Endothelial cell of umbilical vein (primary cell): ENCODE measurements at regions of chr1 and their contacts with region 1.

Region 1: DNA sequence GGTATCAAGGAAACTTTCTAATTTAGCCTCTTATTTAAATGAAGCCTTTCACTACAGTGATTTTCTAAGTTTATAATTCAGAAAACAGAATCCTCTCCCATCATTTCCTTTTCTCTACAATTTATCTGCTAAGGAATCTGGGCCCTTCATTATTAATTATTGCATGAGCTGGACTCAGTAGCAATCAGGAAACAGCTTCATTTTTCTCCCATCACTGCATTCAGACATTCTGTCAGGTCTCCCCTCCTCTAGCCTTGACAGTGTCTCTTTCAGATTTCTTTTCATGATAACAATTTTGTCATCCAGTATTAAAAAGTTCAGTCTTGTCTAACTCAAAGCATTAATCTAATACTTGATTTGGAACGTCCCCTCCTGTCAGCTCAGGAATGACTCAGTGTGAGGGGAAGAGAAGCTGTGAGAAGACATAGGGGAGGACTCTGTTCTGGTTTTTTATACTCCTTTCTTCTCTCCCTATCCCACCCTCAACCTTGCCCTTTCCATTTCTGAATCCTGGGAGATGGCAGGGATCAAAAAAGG is 28.1 kb downstream of the SLC44A5 start:
- DNase-seq: peak; percentile 52
- H3K4me3 ChIP-seq: no peak overlapping the region
- H3K27ac ChIP-seq: no peak overlapping the region
- H3K4me1 ChIP-seq: peaks cover 28% of the 10 kb centered on the region
- H3K27me3 ChIP-seq: no peaks in the 10 kb centered on the region
- CTCF ChIP-seq: peak in 1 of 2 donors; percentile 19
- POLR2A ChIP-seq: no peak

Region 2: DNA sequence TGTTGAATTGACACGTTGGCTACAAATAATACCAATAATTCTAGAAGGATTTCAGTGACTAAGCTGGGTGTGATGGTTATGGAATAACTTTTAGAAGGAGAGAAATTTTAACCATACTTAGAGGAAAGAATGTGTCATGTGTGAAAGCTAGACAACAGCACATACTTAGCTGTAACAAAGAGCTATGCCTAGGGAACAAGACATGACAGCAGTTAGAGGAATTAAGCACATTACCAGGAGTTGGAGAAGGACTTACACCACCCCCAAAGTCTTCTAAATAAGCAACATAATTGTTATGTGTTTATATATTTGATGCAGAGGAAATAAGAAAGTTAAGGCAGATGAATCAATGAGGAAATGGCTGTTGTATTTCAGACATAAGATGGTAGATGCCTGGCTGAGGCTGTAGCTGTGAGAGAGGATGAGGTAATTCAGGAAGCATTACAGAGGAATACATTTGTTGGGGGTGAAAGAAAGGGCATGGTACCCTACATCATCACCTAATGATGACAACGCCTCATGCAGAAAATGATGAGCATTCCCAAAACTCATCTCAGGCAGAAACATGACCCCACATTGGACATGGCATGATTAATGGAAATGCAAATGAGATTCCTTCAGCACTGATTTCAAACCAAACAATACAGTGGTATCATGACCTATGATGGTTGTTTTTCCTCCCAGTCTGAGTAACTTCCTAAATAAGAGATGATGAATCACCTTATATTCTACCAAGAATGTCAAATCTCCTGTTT is 237.1 kb before region 1 on chr1:
- CTCF ChIA-PET with region 1: interaction called, 5 read pairs
- POLR2A ChIA-PET with region 1: no interaction called
- dilution Hi-C with region 1: no loop called
- intact Hi-C with region 1: loop called (anchors 1 kb)
- DNase-seq: peak; percentile 95
- H3K4me3 ChIP-seq: no peak overlapping the region
- H3K27ac ChIP-seq: peak overlapping the region; percentile 94
- H3K4me1 ChIP-seq: peaks cover 27% of the 10 kb centered on the region
- H3K27me3 ChIP-seq: no peaks in the 10 kb centered on the region
- CTCF ChIP-seq: no peak
- POLR2A ChIP-seq: no peak

Region 3: DNA sequence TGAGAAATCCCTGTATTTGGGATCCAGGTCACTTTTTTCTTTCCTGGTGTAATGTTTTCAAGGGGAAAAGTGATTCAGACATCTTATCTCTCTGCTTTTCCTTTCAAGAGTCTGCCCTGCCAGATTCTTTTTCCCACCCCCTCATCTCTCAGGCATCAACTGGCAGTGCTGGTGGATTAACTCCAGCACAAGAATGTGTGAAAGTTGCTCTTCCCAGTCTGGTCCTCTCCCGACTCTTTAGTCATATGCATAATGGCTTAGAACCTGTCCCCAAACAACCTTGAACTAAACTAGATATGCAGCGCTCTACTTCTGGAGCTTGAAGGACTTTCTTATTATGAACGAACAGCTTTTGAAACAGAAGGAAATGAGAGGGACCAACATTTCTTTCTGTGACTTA is 60.4 kb before region 1 on chr1:
- CTCF ChIA-PET with region 1: interaction called, 10 read pairs
- POLR2A ChIA-PET with region 1: no interaction called
- dilution Hi-C with region 1: no loop called
- intact Hi-C with region 1: loop called (anchors 5 kb)
- DNase-seq: peak; percentile 93
- H3K4me3 ChIP-seq: peak overlapping the region in 1 of 3 experiments; percentile 28
- H3K27ac ChIP-seq: peak overlapping the region; percentile 77
- H3K4me1 ChIP-seq: peaks cover 29% of the 10 kb centered on the region
- H3K27me3 ChIP-seq: no peaks in the 10 kb centered on the region
- CTCF ChIP-seq: no peak
- POLR2A ChIP-seq: peak; percentile 26

Region 4: GRCh38 chr1:75548721-75549480 is 33.9 kb before region 1 on chr1:
- CTCF ChIA-PET with region 1: interaction called, 5 read pairs
- POLR2A ChIA-PET with region 1: no interaction called
- dilution Hi-C with region 1: no loop called
- intact Hi-C with region 1: loop called (anchors 2 kb)
- DNase-seq: peak; percentile 86
- H3K4me3 ChIP-seq: no peak overlapping the region
- H3K27ac ChIP-seq: peak overlapping the region; percentile 23
- H3K4me1 ChIP-seq: peaks cover 30% of the 10 kb centered on the region
- H3K27me3 ChIP-seq: no peaks in the 10 kb centered on the region
- CTCF ChIP-seq: no peak
- POLR2A ChIP-seq: no peak